Activated T-helper 2 cell treated with anti-CD3 and anti-CD28 coated beads, Interferon-gamma antibody, Interleukin-2, Interleukin-4, amounts not matched to agents 10 μg/mL and 5 μg/mL and 100 μg/mL, durations not matched to agents 14 hours and 24 hours and 36 hours (primary cell): ENCODE measurements at regions of chr1 and their contacts with region 1.

Region 1: GRCh38 chr1:66350001-66350547 is 183.9 kb upstream of the SGIP1 start:
- DNase-seq: no peak
- H3K4me3 Mint-ChIP-seq: peak overlapping the region; percentile 47
- H3K27ac Mint-ChIP-seq: peak overlapping the region; percentile 72
- H3K4me1 Mint-ChIP-seq: peaks cover 68% of the 10 kb centered on the region
- H3K27me3 Mint-ChIP-seq: no peaks in the 10 kb centered on the region

Region 2: GRCh38 chr1:65108025-65108642 is 1241.9 kb before region 1 on chr1:
- intact Hi-C with region 1: no loop called
- DNase-seq: no peak
- H3K4me3 Mint-ChIP-seq: no peak overlapping the region
- H3K27ac Mint-ChIP-seq: no peak overlapping the region
- H3K4me1 Mint-ChIP-seq: no peaks in the 10 kb centered on the region
- H3K27me3 Mint-ChIP-seq: peaks cover 20% of the 10 kb centered on the region

Region 3: DNA sequence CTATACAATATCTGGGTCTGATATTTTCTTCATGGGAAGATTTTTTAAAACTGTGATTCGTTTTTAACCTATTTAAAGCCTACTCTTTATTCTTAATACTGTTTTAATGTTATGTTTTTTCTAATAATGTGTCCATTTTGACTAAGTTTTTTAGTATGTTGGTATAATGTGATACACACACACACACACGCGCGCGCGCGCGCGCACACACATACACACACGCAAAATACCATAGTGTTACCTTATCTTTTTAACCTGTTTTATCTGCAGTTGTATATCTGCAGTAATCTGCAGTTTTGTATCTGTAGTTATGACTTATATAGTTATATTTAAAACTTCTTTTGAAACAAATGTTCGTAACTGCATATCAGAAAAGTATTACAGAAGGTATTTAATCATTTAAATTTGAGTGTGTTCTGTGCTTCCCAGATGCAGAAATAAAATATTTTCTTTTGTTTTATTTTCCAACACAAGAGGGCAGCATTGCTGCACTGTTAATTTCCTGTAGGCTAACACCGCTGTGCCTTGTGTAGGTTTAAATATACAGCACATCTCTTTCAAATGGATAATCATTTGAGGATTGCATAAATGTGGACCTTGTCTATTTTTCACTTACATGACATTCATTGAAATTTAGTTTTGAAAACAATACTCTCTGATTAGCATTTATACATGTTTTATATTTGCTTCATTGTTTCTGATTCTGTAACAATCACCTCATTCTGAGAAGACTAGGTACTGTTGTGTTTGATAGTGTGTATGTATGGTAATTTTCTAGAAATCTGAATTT is 391.3 kb before region 1 on chr1:
- intact Hi-C with region 1: loop called (anchors 10 kb)
- DNase-seq: no peak
- H3K4me3 Mint-ChIP-seq: no peak overlapping the region
- H3K27ac Mint-ChIP-seq: no peak overlapping the region
- H3K4me1 Mint-ChIP-seq: peaks cover 5% of the 10 kb centered on the region
- H3K27me3 Mint-ChIP-seq: peaks cover 7% of the 10 kb centered on the region

Region 4: DNA sequence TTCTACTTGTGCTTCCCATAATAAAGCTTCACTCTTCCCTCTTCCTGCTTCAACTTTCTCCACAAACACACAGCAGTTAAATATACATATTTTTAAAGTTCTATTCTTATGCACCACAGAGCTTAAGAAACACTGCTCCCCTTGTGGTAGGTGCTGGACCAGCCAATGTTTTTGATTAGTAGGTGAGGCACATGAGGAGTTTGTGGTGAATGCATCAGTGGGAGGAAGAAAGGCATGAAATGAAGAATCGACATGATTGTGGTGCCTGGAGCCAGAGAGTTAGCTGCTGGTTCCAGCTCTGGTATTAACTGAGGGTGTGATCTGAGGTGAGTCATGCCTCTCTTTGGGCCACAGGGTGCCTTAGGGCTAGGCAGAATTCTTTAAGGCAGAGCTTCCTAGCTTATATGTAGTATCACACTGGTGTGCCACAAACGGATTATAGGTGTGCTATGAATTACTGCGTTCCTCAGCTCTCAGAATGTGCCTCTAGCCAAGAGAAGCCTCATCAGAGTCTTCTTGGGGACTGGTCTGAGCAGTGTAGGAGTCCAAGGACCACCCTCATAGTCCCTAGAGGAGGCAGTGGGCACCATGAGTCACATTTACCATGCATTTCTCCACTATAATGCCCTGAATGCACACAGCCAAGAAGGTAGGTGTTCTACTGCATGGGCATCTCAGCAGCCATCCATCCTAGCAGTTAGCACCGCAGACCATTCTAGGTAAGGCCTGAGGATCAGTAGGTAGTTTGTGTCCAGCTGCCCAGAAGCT is 86.5 kb after region 1 on chr1:
- intact Hi-C with region 1: loop called (anchors 5 kb)
- DNase-seq: peak; percentile 31
- H3K4me3 Mint-ChIP-seq: no peak overlapping the region
- H3K27ac Mint-ChIP-seq: no peak overlapping the region
- H3K4me1 Mint-ChIP-seq: peaks cover 32% of the 10 kb centered on the region
- H3K27me3 Mint-ChIP-seq: peaks cover 5% of the 10 kb centered on the region